ENCODE measurements at regions of chr17 and their contacts with region 1.

Region 1: GRCh38 chr17:27293898-27294688 is at the start of gene WSB1:
- DNase-seq: peak; percentile 91 to 94 (median 93)
- H3K4me3 ChIP-seq: peak within 1 kb of the TSS; percentile 96 to 98
- H3K4me3 Mint-ChIP-seq: peak within 1 kb of the TSS; percentile 93 to 100 (median 97)
- H3K27ac ChIP-seq: peak within 1 kb of the TSS; percentile 99
- H3K27ac Mint-ChIP-seq: peak within 1 kb of the TSS; percentile 88 to 100 (median 100)
- H3K4me1 ChIP-seq: peaks cover 46% of the 10 kb centered on the region
- H3K4me1 Mint-ChIP-seq: peaks cover 24 to 55% (median 34%) of the 10 kb centered on the region in 4 donors
- H3K27me3 ChIP-seq: no peaks in the 10 kb centered on the region
- H3K27me3 Mint-ChIP-seq: peaks cover 0 to 1% of the 10 kb centered on the region in 2 donors
- total RNA-seq, gene WSB1: 122 to 130 TPM

Region 2: GRCh38 chr17:27306276-27306835 is 12.3 kb after region 1 on chr17:
- CTCF ChIA-PET with region 1: interaction called, 6 read pairs
- POLR2A ChIA-PET with region 1: interaction called, 33 read pairs
- intact Hi-C with region 1: no loop called
- DNase-seq: no peak
- H3K4me3 ChIP-seq: no peak overlapping the region
- H3K4me3 Mint-ChIP-seq: no peak overlapping the region
- H3K27ac ChIP-seq: no peak overlapping the region
- H3K27ac Mint-ChIP-seq: peak overlapping the region in 1 of 7 donors; percentile 14
- H3K4me1 ChIP-seq: peaks cover 6% of the 10 kb centered on the region
- H3K4me1 Mint-ChIP-seq: peaks cover 14 to 21% (median 17%) of the 10 kb centered on the region in 4 donors
- H3K27me3 ChIP-seq: no peaks in the 10 kb centered on the region
- H3K27me3 Mint-ChIP-seq: no peaks in the 10 kb centered on the region

Region 3: GRCh38 chr17:27313301-27313700 is 19.2 kb after region 1 on chr17:
- CTCF ChIA-PET with region 1: interaction called, 3 read pairs
- POLR2A ChIA-PET with region 1: interaction called, 13 read pairs
- intact Hi-C with region 1: no loop called
- DNase-seq: no peak
- H3K4me3 ChIP-seq: no peak overlapping the region
- H3K4me3 Mint-ChIP-seq: no peak overlapping the region
- H3K27ac ChIP-seq: no peak overlapping the region
- H3K27ac Mint-ChIP-seq: no peak overlapping the region
- H3K4me1 ChIP-seq: no peaks in the 10 kb centered on the region
- H3K4me1 Mint-ChIP-seq: peaks cover 0 to 1% (median 0%) of the 10 kb centered on the region in 4 donors
- H3K27me3 ChIP-seq: no peaks in the 10 kb centered on the region
- H3K27me3 Mint-ChIP-seq: no peaks in the 10 kb centered on the region

Region 4: DNA sequence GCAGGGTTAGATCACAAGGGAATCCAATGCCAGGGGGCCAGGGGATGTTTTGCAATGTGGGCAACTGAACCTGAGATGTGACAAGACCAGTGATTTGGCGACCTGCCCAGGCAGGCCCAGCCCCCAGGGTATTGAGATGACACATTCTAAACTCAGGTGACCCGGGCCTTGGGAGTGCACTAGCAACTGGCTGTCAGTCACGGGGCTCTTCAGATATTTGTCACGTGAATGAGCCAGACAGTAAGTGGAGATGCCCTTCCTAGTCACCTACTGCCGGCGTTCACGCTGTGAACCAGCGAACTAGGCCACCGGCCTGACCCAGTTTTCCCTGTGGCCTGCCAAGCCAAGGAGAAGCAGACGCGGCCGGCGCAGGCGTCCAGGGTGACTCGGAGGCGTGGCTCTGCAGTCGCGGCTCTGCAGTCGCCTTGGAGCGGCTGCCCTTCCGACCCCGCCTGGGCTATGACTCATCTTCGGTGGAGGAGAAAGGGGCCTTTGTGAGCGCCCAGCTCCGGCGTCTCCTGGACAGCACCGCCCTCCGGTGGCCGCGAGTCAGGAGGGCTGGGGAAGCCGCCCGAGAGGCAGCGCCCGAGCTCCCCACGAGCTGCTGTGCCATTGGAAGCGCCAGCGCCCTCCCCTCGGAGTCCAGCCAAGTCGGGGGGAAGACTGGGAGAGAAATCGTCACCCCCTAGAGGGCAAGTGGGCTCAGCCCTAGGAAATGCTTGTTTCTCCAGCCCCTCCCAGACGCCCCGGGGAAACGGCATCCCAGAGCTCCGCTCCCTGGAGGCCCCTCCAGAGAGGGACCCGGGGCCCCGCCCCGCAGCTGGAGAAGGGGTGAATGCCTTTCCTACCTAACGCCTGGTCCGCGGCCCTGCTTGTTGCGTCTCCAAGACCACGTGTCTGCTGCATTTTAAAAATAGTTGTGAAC is 38.7 kb after region 1 on chr17:
- CTCF ChIA-PET with region 1: interaction called, 8 read pairs
- POLR2A ChIA-PET with region 1: interaction called, 45 read pairs
- intact Hi-C with region 1: loop called (anchors 1 kb)
- DNase-seq: peak; percentile 79 to 97 (median 80)
- H3K4me3 ChIP-seq: peak overlapping the region; percentile 47 to 57
- H3K4me3 Mint-ChIP-seq: peak overlapping the region; percentile 72 to 91 (median 85)
- H3K27ac ChIP-seq: peak overlapping the region; percentile 47
- H3K27ac Mint-ChIP-seq: peak overlapping the region; percentile 68 to 93 (median 87)
- H3K4me1 ChIP-seq: peaks cover 7% of the 10 kb centered on the region
- H3K4me1 Mint-ChIP-seq: peaks cover 9 to 22% (median 17%) of the 10 kb centered on the region in 4 donors
- H3K27me3 ChIP-seq: no peaks in the 10 kb centered on the region
- H3K27me3 Mint-ChIP-seq: no peaks in the 10 kb centered on the region

Region 5: DNA sequence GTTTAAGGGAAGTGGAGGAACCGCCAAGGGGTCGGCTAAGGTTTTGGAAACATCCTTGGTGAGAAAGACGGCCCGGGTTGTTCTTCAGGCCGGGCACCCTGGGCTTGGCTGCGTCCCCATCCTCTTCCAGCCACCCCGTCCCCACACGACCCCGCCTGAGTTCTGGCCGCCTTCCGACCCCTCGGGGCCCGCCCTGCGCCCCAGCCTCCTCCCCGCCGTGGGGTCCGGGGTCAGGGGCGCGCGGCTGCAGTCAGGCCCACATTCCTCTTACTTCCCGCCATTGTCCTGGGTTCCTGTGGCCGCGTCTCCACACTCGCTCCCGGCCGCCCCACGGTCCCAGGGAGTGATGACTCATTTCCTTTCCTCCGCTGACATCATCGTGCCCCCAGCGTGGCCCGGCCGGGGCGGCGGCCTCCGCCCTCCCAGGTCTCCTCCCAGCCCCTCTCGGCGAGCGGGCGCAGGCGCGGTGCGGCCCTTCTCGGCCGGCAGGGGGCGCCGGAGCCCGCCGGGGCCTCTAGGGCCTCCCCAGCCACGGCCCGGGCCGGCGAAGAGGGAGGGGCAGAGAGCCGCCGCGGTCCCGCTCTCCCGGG is 59.5 kb after region 1 on chr17:
- CTCF ChIA-PET with region 1: interaction called, 7 read pairs
- POLR2A ChIA-PET with region 1: interaction called, 16 read pairs
- intact Hi-C with region 1: loop called (anchors 1 kb)
- DNase-seq: peak; percentile 82 to 88 (median 83)
- H3K4me3 ChIP-seq: peak overlapping the region; percentile 36 to 68
- H3K4me3 Mint-ChIP-seq: peak overlapping the region; percentile 68 to 89 (median 86)
- H3K27ac ChIP-seq: peak overlapping the region; percentile 80
- H3K27ac Mint-ChIP-seq: peak overlapping the region; percentile 75 to 97 (median 95)
- H3K4me1 ChIP-seq: peaks cover 16% of the 10 kb centered on the region
- H3K4me1 Mint-ChIP-seq: peaks cover 10 to 27% (median 19%) of the 10 kb centered on the region in 4 donors
- H3K27me3 ChIP-seq: no peaks in the 10 kb centered on the region
- H3K27me3 Mint-ChIP-seq: no peaks in the 10 kb centered on the region

Region 6: GRCh38 chr17:27455914-27456680 is 162.0 kb after region 1 on chr17 and contains the start of gene KSR1:
- CTCF ChIA-PET with region 1: interaction called, 3 read pairs
- POLR2A ChIA-PET with region 1: interaction called, 28 read pairs
- intact Hi-C with region 1: loop called (anchors 5 kb)
- DNase-seq: peak; percentile 80 to 82 (median 82)
- H3K4me3 ChIP-seq: peak within 1 kb of the TSS; percentile 61 to 72
- H3K4me3 Mint-ChIP-seq: peak within 1 kb of the TSS; percentile 87 to 97 (median 90)
- H3K27ac ChIP-seq: peak within 1 kb of the TSS; percentile 60
- H3K27ac Mint-ChIP-seq: peak within 1 kb of the TSS; percentile 81 to 95 (median 88)
- H3K4me1 ChIP-seq: peaks cover 22% of the 10 kb centered on the region
- H3K4me1 Mint-ChIP-seq: peaks cover 19 to 38% (median 28%) of the 10 kb centered on the region in 4 donors
- H3K27me3 ChIP-seq: no peaks in the 10 kb centered on the region
- H3K27me3 Mint-ChIP-seq: no peaks in the 10 kb centered on the region
- total RNA-seq, gene KSR1: 33.2 to 40.0 TPM

Region 7: GRCh38 chr17:27473748-27474609 is 179.9 kb after region 1 on chr17:
- CTCF ChIA-PET with region 1: no interaction called
- POLR2A ChIA-PET with region 1: interaction called, 6 read pairs
- intact Hi-C with region 1: loop called (anchors 5 kb)
- DNase-seq: peak; percentile 63 to 94 (median 69)
- H3K4me3 ChIP-seq: peak overlapping the region; percentile 19 to 23
- H3K4me3 Mint-ChIP-seq: peak overlapping the region; percentile 64 to 83 (median 73)
- H3K27ac ChIP-seq: peak overlapping the region; percentile 73
- H3K27ac Mint-ChIP-seq: peak overlapping the region; percentile 93 to 98 (median 95)
- H3K4me1 ChIP-seq: peaks cover 68% of the 10 kb centered on the region
- H3K4me1 Mint-ChIP-seq: peaks cover 50 to 85% (median 66%) of the 10 kb centered on the region in 4 donors
- H3K27me3 ChIP-seq: no peaks in the 10 kb centered on the region
- H3K27me3 Mint-ChIP-seq: no peaks in the 10 kb centered on the region